ENCODE measurements at regions of chr1 and their contacts with region 1.

Region 1: DNA sequence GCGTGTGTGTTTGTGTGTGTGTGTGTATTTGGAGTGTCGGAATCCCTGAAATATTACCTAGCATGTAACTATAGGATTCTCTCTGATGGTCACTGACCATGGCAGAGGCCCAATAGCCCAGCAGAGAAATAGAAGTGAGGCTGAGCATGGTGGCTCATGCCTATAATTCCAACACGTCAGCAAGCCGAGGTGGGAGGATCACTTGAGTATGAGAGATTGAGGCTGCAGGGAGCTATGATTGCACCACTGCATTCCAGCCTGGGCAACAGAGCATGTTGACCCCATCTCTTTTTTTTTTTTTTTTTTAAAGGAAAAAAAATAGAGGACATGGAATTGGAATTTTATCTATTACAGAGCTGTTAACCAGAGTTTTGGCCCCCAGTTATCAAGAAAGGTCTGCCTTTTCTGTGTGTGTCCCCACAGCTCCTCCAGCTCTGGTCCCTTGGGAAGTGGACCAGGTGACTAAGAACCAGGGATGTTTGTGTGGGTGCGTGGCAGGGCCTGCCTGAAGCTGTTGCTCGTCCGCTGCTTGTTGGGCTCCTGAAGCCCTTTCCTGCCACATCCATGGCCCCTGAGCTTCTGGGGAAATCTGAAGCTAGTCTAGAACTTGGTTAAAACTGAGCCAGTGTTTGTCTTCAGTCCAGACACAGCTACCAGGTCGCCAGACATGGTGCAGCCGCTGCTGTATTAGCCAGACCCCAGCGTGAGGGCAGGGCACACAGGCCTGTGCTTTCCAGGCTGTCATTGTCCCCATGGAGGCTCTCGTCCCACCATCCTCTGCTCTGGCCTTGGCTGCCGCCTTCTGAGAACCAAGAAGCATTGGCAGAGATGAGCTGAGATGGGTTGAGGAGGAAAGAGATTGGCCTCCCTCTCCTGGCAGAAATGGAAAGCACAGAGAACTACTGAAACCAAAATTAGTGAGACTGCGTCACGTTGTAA is 25.5 kb downstream of the CAPN9 start:
- DNase-seq: peak; percentile 24 to 52
- H3K4me3 ChIP-seq: no peak overlapping the region
- H3K27ac ChIP-seq: no peak overlapping the region
- H3K4me1 ChIP-seq: peaks cover 11% of the 10 kb centered on the region; the same call in 1 of the 2 replicates
- H3K27me3 ChIP-seq: peaks cover 30% of the 10 kb centered on the region
- CTCF ChIP-seq: peak; percentile 61

Region 2: DNA sequence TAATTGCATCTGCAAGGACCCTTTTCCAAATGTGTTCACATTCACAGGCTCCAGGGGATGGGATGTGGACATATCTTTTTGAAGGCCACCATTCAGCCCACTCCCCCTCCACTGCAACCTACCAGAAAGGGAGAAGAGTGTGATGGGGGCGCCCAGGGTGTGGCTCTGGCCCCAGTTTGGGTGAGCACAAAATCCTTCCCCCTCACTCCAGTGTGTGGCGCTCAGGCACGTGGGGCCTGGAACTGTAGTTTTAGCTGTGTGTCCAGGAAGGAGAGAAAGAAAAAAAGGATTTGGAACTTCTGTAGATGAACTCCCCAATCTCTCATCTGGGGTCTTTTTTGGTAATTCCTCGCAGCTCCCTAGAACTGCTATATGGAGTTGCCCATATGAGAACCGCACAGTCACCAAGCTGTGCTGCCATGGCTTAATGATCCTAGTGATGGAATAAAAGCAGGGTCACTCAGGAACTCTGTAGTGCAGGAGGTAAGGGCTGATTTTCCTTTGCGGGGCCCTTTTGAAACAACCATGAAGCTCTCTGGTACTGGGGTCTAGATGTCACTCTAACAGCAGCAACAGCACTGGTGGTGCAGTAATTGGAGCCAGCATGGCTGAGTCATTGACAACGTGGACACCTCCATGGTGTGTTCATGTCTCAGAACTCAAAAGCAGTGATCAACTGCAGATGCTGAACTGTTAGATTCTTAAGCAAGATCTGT is 75.8 kb before region 1 on chr1:
- CTCF ChIA-PET with region 1: no interaction called
- POLR2A ChIA-PET with region 1: no interaction called
- intact Hi-C with region 1: no loop called
- DNase-seq: no peak
- H3K4me3 ChIP-seq: no peak overlapping the region
- H3K27ac ChIP-seq: no peak overlapping the region
- H3K4me1 ChIP-seq: no peaks in the 10 kb centered on the region
- H3K27me3 ChIP-seq: no peaks in the 10 kb centered on the region
- CTCF ChIP-seq: no peak

Region 3: GRCh38 chr1:230743899-230744298 is 28.8 kb before region 1 on chr1:
- CTCF ChIA-PET with region 1: interaction called, 9 read pairs
- POLR2A ChIA-PET with region 1: no interaction called
- intact Hi-C with region 1: loop called (anchors 2 kb)
- DNase-seq: no peak
- H3K4me3 ChIP-seq: no peak overlapping the region
- H3K27ac ChIP-seq: no peak overlapping the region
- H3K4me1 ChIP-seq: peaks cover 13% of the 10 kb centered on the region
- H3K27me3 ChIP-seq: no peaks in the 10 kb centered on the region
- CTCF ChIP-seq: no peak

Region 4: GRCh38 chr1:230797942-230798418 is 25.3 kb after region 1 on chr1:
- CTCF ChIA-PET with region 1: no interaction called
- POLR2A ChIA-PET with region 1: no interaction called
- intact Hi-C with region 1: no loop called
- DNase-seq: peak; percentile 43 to 49
- H3K4me3 ChIP-seq: no peak overlapping the region
- H3K27ac ChIP-seq: no peak overlapping the region
- H3K4me1 ChIP-seq: no peaks in the 10 kb centered on the region
- H3K27me3 ChIP-seq: no peaks in the 10 kb centered on the region
- CTCF ChIP-seq: peak; percentile 76

Region 5: DNA sequence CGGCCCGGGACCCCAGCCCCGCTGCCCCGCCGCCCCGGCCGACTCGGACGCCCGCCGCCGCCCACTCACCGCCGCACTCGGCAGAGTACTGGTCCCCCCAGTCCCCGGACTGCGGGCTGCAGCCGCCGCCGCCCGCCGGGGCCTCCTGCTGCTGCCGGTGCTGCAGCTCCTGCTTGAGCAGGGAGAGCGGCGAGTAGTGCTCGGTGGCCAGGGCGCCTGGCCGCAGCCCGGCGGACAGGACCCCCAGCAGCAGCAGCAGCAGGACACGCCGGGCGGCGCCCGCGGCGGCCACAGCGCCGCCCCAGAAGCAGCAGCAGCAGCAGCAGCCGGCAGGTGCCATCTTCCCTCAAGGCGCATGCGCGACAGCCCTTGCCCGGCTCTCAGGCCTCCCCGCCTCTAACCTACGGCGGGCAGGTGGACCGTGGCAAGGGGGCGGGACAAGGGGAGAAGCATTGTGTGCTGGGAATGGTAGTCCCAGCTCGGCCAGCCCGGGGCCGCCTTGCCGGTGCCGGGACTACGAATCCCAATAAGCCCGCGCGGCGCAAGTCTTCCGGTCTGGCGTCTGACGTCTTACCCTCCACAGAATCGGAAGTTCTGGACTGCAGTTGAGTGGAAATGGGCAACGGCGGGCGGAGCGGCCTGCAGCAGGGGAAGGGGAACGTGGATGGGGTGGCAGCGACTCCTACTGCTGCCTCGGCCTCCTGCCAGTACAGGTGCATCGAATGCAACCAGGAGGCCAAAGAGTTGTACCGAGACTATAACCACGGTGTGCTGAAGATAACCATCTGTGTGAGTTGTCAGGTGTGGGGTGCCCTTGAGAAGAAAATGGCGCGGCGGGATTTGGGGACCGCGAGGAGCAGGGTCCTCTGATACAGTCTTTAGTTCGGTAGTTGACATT is 206.0 kb after region 1 on chr1 and contains the starts of genes ARV1 and TTC13:
- CTCF ChIA-PET with region 1: no interaction called
- POLR2A ChIA-PET with region 1: no interaction called
- intact Hi-C with region 1: no loop called
- DNase-seq: peak; percentile 97 to 98
- H3K4me3 ChIP-seq: peak within 1 kb of the TSS; percentile 86
- H3K27ac ChIP-seq: no peak within 1 kb of the TSS
- H3K4me1 ChIP-seq: peaks cover 19% of the 10 kb centered on the region
- H3K27me3 ChIP-seq: no peaks in the 10 kb centered on the region
- CTCF ChIP-seq: peak; percentile 50; the same call in 1 of the 2 replicates
- total RNA-seq, gene ARV1: 8.0 and 12.0 TPM in 2 replicates
- total RNA-seq, gene TTC13: 7.5 and 10.7 TPM in 2 replicates